Activated CD4-positive, alpha-beta T cell treated with anti-CD3 and anti-CD28 coated beads, Interleukin-2, amount 10 ng/mL, durations not matched to agents 24 days and 14 days (primary cell): ENCODE measurements at regions of chr10 and their contacts with region 1.

Region 1: DNA sequence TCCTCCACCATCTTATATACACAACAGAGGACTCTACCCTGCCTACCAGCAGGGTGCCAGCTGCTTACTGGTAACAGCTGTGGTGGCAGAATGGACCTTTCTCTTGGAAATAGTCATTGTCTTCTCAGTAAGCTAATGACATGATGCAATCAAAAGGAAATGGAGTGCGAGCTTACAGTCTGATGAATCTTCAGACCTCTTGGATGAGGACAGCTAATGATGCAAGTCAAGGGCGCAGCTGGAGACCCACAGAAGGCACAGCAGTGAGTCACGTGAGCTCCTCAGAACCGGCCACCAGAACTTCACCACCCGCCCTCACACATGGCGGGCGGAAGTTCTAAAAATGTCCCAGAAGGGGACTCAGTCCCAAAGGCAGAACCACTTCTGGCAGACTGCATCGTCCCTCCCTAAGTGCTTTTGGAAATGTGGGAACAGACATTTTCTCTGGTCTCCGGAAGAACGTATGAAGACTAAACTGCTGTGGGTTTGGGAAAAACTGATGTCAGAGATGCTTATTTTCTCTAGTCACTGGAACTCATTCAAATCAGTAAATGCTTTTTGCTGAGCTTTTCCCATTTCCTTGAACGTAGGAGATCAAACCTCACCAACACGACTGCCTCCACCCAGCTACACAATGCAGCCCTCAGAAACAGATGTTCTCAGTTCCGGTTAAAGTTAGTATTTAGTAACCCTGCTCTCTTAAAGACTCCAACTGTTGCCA is 96.4 kb downstream of the FAS start:
- DNase-seq: peak; percentile 53
- H3K4me3 Mint-ChIP-seq: no peak overlapping the region
- H3K27ac Mint-ChIP-seq: no peak overlapping the region
- H3K4me1 Mint-ChIP-seq: peaks cover 9% of the 10 kb centered on the region
- H3K27me3 Mint-ChIP-seq: peaks cover 8% of the 10 kb centered on the region

Region 2: DNA sequence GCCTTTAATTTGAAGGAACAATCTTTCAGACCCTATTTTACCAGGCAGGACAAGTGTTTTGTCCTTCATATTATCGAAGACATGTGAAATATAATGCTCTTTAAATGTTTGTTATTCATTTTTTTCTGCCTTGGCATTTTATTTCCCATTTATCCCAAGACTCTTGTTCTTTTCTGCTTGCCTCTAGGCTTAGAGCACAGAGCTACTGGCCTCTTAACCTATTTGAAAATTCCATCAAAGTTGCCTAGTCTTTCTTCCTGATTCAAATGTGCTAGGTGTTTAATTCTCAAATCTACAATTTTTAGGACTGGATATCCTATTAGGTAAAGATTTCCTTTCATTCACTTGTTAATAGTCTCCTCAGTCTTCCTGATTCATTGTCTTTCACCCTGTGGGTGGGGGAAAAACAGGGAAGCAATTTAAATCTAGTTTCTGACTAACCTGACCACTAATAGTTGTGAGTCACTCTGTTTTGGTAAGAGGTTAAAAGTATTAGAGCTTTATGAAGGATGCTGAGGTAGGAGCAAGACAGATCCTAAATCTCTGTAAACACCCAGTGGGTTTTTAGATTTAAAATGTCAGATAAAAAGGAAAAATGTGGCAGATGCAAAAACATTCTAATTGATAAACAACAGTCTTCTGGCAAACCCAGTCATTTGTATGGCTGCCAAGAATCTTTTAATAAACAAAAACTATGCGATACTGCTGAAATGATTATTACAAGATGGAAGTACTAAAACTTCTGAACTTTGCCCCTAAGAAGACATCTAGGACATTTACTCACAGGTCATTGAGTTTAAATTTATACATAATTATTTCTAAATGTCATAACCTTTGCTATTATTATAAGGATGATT is 379.3 kb before region 1 on chr10:
- intact Hi-C with region 1: loop called (anchors 2 kb)
- DNase-seq: no peak
- H3K4me3 Mint-ChIP-seq: no peak overlapping the region
- H3K27ac Mint-ChIP-seq: peak overlapping the region; percentile 1
- H3K4me1 Mint-ChIP-seq: peaks cover 15% of the 10 kb centered on the region
- H3K27me3 Mint-ChIP-seq: peaks cover 28% of the 10 kb centered on the region

Region 3: DNA sequence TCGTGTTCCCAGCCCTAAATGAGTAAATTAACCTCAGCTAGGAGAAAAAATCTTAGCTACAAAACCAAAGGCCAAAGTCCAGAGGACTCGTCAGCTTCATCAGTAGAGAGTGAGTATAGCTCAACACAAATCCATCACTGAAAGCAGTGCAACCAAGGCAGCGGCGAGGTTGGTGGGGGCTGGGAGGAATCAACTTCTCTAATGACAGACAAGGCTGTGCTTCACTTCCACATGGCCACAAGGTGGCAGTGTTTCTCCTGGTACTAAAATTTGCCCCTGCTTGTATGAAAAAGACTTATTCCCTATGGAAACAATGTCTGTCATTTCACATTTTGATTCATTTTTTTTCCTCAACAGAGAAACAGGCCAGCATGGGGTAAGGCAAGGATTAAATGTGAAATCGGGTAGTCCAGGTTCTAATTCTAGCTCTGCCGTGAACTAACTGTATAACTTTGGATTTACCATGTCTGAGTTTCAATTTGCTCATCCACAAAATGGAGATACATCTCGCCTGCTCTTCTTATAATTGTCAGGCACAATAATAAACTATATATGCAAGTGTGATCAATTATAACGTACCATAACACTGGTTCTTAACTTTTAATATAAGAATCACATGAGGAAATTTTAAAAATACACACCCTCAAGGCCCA is 57.0 kb before region 1 on chr10:
- intact Hi-C with region 1: loop called (anchors 1 kb)
- DNase-seq: peak; percentile 90
- H3K4me3 Mint-ChIP-seq: no peak overlapping the region
- H3K27ac Mint-ChIP-seq: no peak overlapping the region
- H3K4me1 Mint-ChIP-seq: peaks cover 33% of the 10 kb centered on the region
- H3K27me3 Mint-ChIP-seq: no peaks in the 10 kb centered on the region

Region 4: GRCh38 chr10:89207181-89207800 is 120.3 kb after region 1 on chr10 and contains the start of gene CH25H:
- intact Hi-C with region 1: loop called (anchors 2 kb)
- DNase-seq: peak; percentile 80
- H3K4me3 Mint-ChIP-seq: peak within 1 kb of the TSS; percentile 87
- H3K27ac Mint-ChIP-seq: peak within 1 kb of the TSS; percentile 71
- H3K4me1 Mint-ChIP-seq: peaks cover 17% of the 10 kb centered on the region
- H3K27me3 Mint-ChIP-seq: peaks cover 35% of the 10 kb centered on the region
- total RNA-seq, gene CH25H: not detected in 2 replicates